Activated CD8-positive, alpha-beta T cell treated with anti-CD3 and anti-CD28 coated beads for 36 hours (primary cell): ENCODE measurements at regions of chr2 and their contacts with region 1.

Region 1: GRCh38 chr2:219206442-219207253 is at the start of gene ZFAND2B:
- DNase-seq: peak; percentile 96
- ATAC-seq: peak; percentile 93
- H3K4me3 Mint-ChIP-seq: peak within 1 kb of the TSS; percentile 90
- H3K27ac Mint-ChIP-seq: peak within 1 kb of the TSS; percentile 96
- H3K4me1 Mint-ChIP-seq: peaks cover 41% of the 10 kb centered on the region
- H3K27me3 Mint-ChIP-seq: no peaks in the 10 kb centered on the region
- CTCF ChIP-seq: no peak
- total RNA-seq, gene ZFAND2B: 31.3 to 33.3 TPM

Region 2: GRCh38 chr2:219160186-219161017 is 46.2 kb before region 1 on chr2 and contains the start of gene NHEJ1:
- CTCF ChIA-PET with region 1: interaction called, 22 read pairs
- POLR2A ChIA-PET with region 1: interaction called, 5 read pairs
- intact Hi-C with region 1: loop called (anchors 5 kb)
- DNase-seq: peak; percentile 98
- ATAC-seq: peak; percentile 92
- H3K4me3 Mint-ChIP-seq: peak within 1 kb of the TSS; percentile 85
- H3K27ac Mint-ChIP-seq: peak within 1 kb of the TSS; percentile 93
- H3K4me1 Mint-ChIP-seq: peaks cover 18% of the 10 kb centered on the region
- H3K27me3 Mint-ChIP-seq: no peaks in the 10 kb centered on the region
- CTCF ChIP-seq: peak; percentile 99
- total RNA-seq, gene NHEJ1: 22.4 to 26.3 TPM

Region 3: GRCh38 chr2:219171231-219171651 is 35.4 kb before region 1 on chr2:
- CTCF ChIA-PET with region 1: interaction called, 49 read pairs
- POLR2A ChIA-PET with region 1: interaction called, 27 read pairs
- intact Hi-C with region 1: loop called (anchors 5 kb)
- DNase-seq: peak; percentile 42
- ATAC-seq: peak; percentile 53
- H3K4me3 Mint-ChIP-seq: no peak overlapping the region
- H3K27ac Mint-ChIP-seq: no peak overlapping the region
- H3K4me1 Mint-ChIP-seq: peaks cover 34% of the 10 kb centered on the region
- H3K27me3 Mint-ChIP-seq: no peaks in the 10 kb centered on the region
- CTCF ChIP-seq: peak; percentile 94

Region 4: DNA sequence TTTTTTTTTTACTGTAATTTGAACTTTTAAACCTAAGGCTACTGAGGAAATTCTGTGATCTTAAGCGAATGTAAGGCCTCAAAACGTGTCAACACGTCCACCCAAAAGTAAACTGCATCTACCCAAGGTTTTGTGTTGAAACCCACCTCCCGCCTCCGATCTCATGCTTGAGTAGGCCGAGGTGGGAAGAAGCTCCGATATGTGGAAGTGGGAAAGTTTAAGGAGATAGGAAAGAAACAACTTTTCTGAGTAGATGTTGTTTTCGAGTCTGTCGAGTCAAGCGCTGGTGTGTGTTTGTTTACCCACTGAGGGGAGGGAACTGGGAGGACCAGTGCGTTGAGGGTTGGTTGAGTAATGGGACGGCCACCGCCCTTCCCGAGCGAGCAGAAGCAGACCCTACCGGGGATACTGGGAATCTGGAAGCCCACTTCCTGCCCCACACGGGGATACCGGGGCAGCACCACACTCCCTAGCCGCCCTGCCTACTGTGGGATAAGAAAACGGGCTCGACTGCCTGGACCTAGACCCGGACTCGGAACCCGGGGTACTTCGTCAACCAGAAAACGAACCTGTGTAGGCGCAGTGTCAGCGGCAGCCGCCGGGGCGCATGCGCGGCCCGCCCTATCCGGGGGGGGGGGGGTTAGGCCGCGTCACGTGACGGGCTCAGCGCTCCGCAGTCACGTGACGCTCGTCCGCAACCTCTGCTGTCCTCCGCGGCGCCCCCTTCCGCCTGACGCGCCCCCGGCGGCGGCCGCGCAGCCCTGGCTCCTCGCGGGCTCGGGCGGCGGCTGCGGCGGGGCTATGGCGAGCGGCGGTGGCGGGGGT is 28.9 kb before region 1 on chr2 and contains the start of gene RETREG2:
- CTCF ChIA-PET with region 1: interaction called, 49 read pairs
- POLR2A ChIA-PET with region 1: interaction called, 27 read pairs
- intact Hi-C with region 1: loop called (anchors 5 kb)
- DNase-seq: peak; percentile 82
- ATAC-seq: peak; percentile 46
- H3K4me3 Mint-ChIP-seq: peak within 1 kb of the TSS; percentile 97
- H3K27ac Mint-ChIP-seq: peak within 1 kb of the TSS; percentile 97
- H3K4me1 Mint-ChIP-seq: peaks cover 57% of the 10 kb centered on the region
- H3K27me3 Mint-ChIP-seq: no peaks in the 10 kb centered on the region
- CTCF ChIP-seq: peak; percentile 40
- total RNA-seq, gene RETREG2: 63.8 to 67.8 TPM

Region 5: DNA sequence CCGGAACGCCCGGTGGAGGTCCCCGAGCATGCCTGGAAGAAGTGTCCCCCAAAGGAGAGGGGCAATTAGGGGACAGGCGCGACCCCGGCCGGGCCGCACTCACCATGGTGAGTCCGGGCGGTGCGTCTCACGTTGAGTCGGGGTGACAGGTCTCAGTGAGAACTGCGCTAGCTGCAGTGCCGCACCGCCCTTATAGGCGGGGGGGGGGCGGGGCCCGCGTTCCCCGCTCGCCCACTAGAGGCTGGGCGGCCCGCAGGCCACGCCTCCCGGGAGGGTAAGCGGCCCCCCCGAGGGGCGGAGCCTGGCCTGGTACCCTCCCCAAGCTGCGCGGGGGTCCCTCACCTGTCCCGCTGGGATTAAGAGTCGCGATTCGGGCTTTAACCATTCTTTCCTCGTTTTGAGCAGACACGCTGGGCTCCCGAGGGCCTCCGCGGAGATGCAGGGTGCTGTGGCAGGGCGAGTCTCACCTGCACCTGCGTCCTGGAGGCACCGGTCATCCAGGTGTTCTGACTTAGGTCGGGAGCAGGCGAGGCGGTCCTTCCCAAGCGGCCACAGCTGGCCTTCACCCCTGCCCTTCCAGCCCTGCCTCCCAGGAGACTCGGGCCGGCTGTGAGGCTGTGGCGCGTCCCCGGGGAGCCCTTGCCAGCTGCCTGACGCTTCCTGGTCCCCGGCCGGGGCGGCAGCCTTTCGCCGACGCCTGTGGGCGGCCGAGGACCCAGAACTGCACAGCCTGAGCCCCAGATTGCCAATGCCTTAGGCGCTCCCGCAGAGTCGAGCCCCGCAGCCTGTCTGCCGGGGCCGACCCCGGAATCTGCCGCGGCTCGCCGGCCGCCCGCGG is 47.3 kb after region 1 on chr2 and contains the start of gene TUBA4A:
- CTCF ChIA-PET with region 1: no interaction called
- POLR2A ChIA-PET with region 1: interaction called, 12 read pairs
- intact Hi-C with region 1: no loop called
- DNase-seq: peak; percentile 92
- ATAC-seq: peak; percentile 73
- H3K4me3 Mint-ChIP-seq: peak within 1 kb of the TSS; percentile 77
- H3K27ac Mint-ChIP-seq: peak within 1 kb of the TSS; percentile 94
- H3K4me1 Mint-ChIP-seq: peaks cover 46% of the 10 kb centered on the region
- H3K27me3 Mint-ChIP-seq: no peaks in the 10 kb centered on the region
- CTCF ChIP-seq: no peak
- total RNA-seq, gene TUBA4A: 226 TPM